WTC11 (cell line): ENCODE measurements at regions of chr5 and their contacts with region 1.

Region 1: GRCh38 chr5:154196955-154197652 is 6.6 kb downstream of the GALNT10 start:
- DNase-seq: no peak
- ATAC-seq: peak; percentile 34
- H3K4me3 Mint-ChIP-seq: no peak overlapping the region
- H3K27ac Mint-ChIP-seq: no peak overlapping the region
- H3K4me1 Mint-ChIP-seq: peaks cover 68% of the 10 kb centered on the region
- H3K27me3 Mint-ChIP-seq: peaks cover 5% of the 10 kb centered on the region
- CTCF ChIP-seq: no peak

Region 2: GRCh38 chr5:153974131-153974812 is 222.8 kb before region 1 on chr5:
- CTCF ChIA-PET with region 1: interaction called, 16 read pairs
- POLR2A ChIA-PET with region 1: no interaction called
- DNase-seq: peak; percentile 20
- ATAC-seq: peak; percentile 84
- H3K4me3 Mint-ChIP-seq: no peak overlapping the region
- H3K27ac Mint-ChIP-seq: no peak overlapping the region
- H3K4me1 Mint-ChIP-seq: no peaks in the 10 kb centered on the region
- H3K27me3 Mint-ChIP-seq: no peaks in the 10 kb centered on the region; the same call in 1 of the 2 replicates
- CTCF ChIP-seq: peak; percentile 55

Region 3: DNA sequence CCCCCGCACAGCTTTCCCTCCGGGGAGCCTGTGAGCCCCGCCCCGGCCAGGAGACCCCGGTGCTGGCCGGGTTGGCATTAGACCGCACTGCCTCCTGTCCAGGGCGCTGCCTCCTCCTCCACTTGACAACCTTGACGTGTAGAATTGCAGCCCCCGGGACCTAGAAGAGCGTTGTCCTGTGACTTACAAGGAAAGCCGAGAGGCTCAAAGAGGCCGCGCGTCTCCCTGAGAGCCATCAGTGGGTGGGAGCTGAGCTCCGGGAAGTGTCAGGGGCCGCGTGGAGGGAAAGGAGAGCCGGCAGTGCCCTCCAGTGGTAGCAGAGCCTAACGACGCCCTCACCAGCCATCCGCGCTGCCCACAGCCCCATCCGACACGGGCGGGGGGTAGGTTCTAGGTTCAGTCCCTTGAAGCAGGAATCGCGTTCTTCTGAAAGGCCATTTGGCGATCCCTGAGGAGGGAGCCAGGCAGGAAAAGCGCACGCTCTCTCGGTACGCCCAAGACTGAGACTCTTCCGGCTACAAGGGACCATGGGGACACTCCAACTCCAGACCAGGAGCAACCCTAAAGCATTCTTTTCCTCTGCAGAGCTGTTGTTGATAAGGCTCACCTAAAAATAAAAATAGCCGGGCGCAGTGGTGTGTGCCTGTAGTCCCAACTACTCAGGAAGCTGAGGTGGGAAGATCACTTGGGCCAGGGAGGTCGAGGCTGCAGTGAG is 208.1 kb after region 1 on chr5:
- CTCF ChIA-PET with region 1: interaction called, 32 read pairs
- POLR2A ChIA-PET with region 1: no interaction called
- DNase-seq: peak; percentile 86
- ATAC-seq: peak; percentile 93
- H3K4me3 Mint-ChIP-seq: peak overlapping the region; percentile 57
- H3K27ac Mint-ChIP-seq: no peak overlapping the region
- H3K4me1 Mint-ChIP-seq: peaks cover 13% of the 10 kb centered on the region
- H3K27me3 Mint-ChIP-seq: no peaks in the 10 kb centered on the region; the same call in 1 of the 2 replicates
- CTCF ChIP-seq: peak; percentile 86